ENCODE measurements at regions of chr15 and their contacts with region 1.

Region 1: GRCh38 chr15:88904624-88905327 is 8.4 kb downstream of the MFGE8 start:
- DNase-seq: peak; percentile 81
- H3K4me3 ChIP-seq: no peak overlapping the region
- H3K27ac ChIP-seq: no peak overlapping the region
- H3K4me1 ChIP-seq: peaks cover 7% of the 10 kb centered on the region
- CTCF ChIP-seq: peak; percentile 96

Region 2: DNA sequence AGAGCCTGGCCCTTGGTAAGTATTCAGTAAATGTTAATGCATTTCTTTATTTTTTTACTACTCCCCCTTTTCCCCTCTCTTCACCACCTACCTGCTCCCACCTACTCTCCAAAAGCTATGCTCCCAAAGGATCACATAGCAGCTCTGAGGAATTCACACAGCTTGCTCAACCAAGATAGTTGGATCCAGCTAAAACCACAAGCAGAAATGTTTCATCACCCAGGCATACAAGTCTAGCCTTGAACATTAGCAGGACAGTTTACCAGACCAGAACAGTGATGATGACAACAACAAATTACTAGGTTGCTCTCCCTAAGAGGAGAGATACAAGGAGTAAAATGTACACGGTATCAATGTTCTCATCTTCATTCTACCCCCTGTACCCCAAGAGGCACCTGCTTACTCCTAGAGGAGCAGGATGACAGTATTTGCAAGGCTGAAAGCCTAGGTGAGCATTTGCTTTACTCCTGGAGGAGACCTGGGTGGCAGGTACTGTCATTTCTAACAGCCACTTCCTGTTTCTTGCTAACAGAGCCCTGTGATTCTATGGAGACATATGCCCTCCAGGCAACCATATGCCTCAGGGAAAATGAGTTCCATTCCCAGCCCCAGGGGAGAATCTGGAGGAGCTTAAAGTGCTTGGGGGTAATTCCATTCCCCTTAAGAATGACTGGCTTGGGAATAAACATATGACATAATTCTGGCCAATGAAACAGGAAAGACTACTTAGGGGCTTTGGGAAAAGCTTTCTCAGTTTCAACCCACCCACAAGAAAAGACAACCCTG is 885.7 kb before region 1 on chr15:
- CTCF ChIA-PET with region 1: no interaction called
- POLR2A ChIA-PET with region 1: no interaction called
- intact Hi-C with region 1: no loop called
- DNase-seq: no peak
- H3K4me3 ChIP-seq: no peak overlapping the region
- H3K27ac ChIP-seq: no peak overlapping the region
- H3K4me1 ChIP-seq: no peaks in the 10 kb centered on the region
- CTCF ChIP-seq: no peak

Region 3: DNA sequence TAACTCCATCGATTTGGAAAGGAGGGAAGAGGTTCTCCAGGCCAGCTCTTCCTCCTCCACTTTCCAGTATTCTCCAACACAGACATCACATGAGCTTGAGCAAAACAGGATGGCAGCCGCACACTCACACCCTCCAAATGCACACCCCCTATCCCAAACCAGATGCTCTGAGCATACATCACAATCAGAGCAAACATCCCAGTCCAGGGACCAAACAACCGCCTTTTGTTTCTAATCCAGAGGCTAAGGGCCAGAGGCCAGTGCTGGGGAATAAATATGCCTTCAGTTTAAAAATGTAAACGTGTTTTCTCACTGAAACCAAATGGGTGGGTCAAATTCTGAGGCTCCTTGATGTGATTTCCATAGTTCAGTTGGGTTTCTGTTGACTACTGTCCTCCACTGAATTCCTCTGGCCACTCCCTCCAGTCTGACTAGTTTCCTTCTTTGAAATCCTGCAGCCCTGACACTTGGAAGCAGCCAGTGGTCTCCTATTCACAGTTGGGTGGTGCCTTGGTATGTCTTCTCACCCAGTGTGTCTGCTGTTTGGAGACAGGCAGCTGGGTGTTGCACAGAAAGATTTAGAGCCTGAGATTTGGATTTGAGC is 27.6 kb after region 1 on chr15:
- CTCF ChIA-PET with region 1: no interaction called
- POLR2A ChIA-PET with region 1: no interaction called
- intact Hi-C with region 1: no loop called
- DNase-seq: no peak
- H3K4me3 ChIP-seq: no peak overlapping the region
- H3K27ac ChIP-seq: no peak overlapping the region
- H3K4me1 ChIP-seq: no peaks in the 10 kb centered on the region
- CTCF ChIP-seq: no peak

Region 4: DNA sequence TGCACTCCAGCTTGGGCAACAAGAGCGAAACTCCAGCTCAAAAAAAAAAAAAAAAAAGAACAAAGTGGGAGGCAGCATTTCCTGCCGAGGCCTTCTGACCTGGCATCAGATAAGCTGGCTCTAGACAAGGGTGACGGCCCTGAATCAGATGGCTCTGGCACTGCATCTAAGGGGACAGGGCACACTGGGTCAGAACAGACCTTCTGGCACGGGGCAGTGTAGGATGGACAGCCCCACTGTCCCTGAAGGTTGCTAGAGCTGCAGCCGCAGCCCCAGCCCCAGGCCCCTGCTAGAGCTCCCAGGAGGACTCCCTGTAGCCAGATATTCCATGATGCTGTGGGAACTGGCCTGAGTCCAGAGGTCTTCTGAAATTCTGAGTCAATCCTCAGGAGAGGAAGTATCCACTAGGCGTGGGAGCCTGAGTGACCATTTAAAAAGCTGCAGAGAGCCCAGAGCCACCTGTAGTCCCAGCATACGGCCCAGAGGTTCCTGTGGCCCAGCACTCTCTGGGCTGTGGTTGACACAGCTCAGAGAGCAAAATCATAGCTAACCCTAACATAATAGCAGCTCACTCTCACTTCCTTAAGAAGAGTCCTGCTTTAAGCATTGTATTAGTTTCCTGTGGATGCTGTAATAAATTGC is 77.6 kb after region 1 on chr15:
- CTCF ChIA-PET with region 1: no interaction called
- POLR2A ChIA-PET with region 1: no interaction called
- intact Hi-C with region 1: no loop called
- DNase-seq: peak; percentile 66
- H3K4me3 ChIP-seq: peak overlapping the region; percentile 5
- H3K27ac ChIP-seq: peak overlapping the region; percentile 54
- H3K4me1 ChIP-seq: peaks cover 17% of the 10 kb centered on the region
- CTCF ChIP-seq: no peak

Region 5: DNA sequence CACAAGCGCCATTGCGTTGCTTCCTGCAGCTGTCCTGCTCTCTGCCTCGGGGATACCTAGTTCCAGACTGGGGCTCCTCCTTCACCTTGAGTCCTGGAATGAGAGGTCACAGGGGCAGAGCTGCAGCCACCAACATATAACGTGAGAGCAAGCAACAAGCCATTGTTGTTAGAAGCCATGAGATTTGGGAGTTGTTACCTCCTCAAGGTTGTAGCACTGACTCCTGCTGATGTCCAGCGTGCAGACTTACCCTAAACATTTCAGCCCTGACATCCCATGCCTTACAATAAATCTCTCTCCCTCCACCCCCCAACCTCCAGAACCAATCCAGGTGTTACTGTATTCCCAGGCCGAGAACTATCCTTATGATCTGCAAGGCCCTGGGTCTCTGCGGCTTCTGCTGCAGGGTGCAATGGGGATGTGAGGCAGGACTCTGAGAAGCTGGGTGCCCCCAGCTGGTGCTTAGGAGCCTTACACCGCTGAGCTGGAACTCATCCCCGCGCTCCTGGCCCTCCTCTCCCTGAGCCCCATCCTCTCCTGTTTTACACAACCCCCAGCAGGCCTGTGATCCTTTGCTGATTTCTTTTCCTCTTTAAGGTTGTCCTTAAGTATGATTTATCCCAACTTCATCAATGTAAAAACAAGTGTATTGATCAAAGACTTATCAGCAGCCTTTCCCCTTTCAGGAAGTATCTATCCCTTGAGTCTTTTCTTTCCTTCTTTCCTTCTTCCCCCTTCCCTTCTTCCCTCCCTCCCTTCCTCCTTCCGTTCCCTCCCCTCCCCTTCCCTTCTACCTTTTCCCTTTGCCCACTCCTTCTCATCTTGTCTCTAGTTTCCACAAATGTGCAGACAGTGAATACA is 99.3 kb after region 1 on chr15:
- CTCF ChIA-PET with region 1: interaction called, 5 read pairs
- POLR2A ChIA-PET with region 1: interaction called, 3 read pairs
- intact Hi-C with region 1: loop called (anchors 1 kb)
- DNase-seq: peak; percentile 11
- H3K4me3 ChIP-seq: no peak overlapping the region
- H3K27ac ChIP-seq: no peak overlapping the region
- H3K4me1 ChIP-seq: no peaks in the 10 kb centered on the region
- CTCF ChIP-seq: peak; percentile 53

Region 6: DNA sequence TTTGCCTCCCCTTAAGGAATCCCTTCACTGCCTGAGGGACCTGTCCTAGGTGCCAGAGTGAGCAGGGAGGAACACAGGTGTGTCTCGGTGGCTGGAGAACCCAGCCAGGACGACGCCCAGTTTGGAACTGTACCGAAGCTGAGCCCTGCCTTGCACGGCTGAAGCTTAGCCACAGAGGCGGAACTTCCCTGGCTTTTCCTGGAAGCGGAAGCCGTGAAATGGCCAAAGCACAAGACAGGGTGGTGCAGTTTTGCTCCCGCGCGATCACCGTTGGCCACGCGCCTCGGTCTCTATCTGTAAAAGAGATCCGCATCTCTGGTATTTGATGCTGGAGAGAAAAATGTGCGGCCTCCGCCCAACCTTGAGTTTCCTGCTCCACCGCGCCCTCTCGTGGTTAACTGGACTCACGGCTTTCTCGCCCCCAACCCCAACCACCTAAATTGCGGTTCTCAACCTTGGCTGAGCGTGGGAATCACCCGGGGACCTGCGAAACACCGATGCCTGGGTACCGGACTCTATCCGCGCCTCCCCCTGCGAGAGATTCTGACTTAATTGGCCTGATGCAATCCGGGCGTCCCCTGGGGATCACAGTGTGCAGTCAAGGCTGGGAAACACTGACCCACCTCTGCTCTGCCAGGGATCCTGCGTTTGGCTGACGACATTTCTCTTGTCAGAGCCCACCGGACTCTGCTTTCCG is 112.7 kb after region 1 on chr15:
- CTCF ChIA-PET with region 1: no interaction called
- POLR2A ChIA-PET with region 1: no interaction called
- intact Hi-C with region 1: loop called (anchors 1 kb)
- DNase-seq: peak; percentile 79
- H3K4me3 ChIP-seq: peak overlapping the region; percentile 48
- H3K27ac ChIP-seq: no peak overlapping the region
- H3K4me1 ChIP-seq: peaks cover 2% of the 10 kb centered on the region
- CTCF ChIP-seq: peak; percentile 92

Region 7: GRCh38 chr15:89177633-89178306 is 273.0 kb after region 1 on chr15:
- CTCF ChIA-PET with region 1: interaction called, 3 read pairs
- POLR2A ChIA-PET with region 1: no interaction called
- intact Hi-C with region 1: loop called (anchors 1 kb)
- DNase-seq: peak; percentile 69
- H3K4me3 ChIP-seq: no peak overlapping the region
- H3K27ac ChIP-seq: no peak overlapping the region
- H3K4me1 ChIP-seq: no peaks in the 10 kb centered on the region
- CTCF ChIP-seq: peak; percentile 97

Measured in OCI-LY7 (cell line).